Activated T-helper 2 cell treated with anti-CD3 and anti-CD28 coated beads, Interferon-gamma antibody, Interleukin-2, Interleukin-4, amounts not matched to agents 10 μg/mL and 5 μg/mL and 100 μg/mL, durations not matched to agents 14 hours and 24 hours and 36 hours (primary cell): ENCODE measurements at regions of chr13 and their contacts with region 1.

Region 1: DNA sequence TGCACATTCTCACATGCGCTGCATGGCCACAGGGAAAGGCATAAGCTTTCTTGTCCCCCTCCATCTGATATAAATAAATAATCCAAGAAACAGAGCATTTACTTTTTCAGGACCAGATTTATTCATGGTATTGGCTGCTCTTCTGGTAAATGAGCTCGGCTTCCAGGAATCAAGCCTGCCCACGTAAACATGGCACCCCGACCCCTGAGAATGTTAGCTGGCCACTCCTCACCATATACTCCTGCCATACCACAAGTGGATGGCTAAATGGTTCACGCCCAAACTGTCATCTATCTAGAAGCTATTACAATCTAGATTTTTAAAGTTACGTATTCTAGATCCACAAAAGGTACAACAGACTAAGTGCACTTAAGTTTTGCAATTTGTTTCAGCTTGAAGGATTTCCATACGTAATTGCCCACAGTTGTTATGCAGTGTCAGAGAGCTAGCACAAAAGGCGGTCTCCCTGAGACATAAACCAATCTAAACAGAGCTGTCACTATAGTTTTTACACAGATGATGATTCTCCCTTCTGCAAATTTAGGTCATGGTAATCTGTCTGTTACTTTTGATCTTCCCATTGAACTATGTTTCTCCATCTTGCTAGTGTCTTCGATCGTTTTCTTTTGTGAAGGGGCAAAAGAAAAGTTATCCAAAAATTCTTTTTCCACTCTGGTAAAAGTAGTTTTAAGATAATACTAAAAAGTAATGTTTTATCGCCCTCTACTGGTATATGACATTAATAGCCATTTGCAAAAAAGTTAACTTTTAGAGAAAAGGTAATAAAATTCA is 16.2 kb upstream of the FOXO1 start:
- DNase-seq: no peak
- H3K4me3 Mint-ChIP-seq: no peak overlapping the region
- H3K27ac Mint-ChIP-seq: no peak overlapping the region
- H3K4me1 Mint-ChIP-seq: peaks cover 10% of the 10 kb centered on the region
- H3K27me3 Mint-ChIP-seq: no peaks in the 10 kb centered on the region

Region 2: DNA sequence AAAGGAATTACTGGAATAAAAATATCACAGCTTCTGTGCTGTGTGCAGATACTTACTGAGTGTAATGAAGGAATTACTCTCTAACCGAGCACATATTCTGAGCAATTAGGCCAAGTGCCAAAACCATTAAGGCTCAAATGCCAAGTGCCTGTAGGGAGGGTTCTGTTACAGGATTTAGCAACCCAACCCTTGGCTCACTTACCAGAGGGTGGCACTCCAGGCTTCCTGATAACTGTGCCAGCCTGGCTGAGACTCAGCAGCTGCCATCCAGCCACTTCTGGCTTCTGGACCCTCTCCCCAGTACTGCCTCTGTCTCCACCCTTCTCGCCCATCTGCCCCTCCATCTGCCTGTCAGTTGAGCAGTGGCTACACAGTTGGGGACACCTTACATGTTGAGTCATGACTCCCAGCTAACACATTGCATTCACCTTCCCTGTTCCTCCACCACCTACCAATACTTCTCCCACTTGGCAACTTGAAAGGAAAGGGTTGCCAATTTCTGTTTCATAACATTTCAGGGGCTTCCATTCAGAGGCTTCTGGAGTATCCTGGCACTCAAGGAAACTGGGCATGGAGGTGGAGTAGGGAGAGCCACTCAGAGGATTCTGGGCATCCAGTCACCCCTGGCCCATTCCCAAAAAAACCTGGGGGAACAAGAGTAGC is 916.7 kb before region 1 on chr13:
- intact Hi-C with region 1: loop called (anchors 5 kb)
- DNase-seq: no peak
- H3K4me3 Mint-ChIP-seq: no peak overlapping the region
- H3K27ac Mint-ChIP-seq: no peak overlapping the region
- H3K4me1 Mint-ChIP-seq: peaks cover 5% of the 10 kb centered on the region
- H3K27me3 Mint-ChIP-seq: no peaks in the 10 kb centered on the region

Region 3: DNA sequence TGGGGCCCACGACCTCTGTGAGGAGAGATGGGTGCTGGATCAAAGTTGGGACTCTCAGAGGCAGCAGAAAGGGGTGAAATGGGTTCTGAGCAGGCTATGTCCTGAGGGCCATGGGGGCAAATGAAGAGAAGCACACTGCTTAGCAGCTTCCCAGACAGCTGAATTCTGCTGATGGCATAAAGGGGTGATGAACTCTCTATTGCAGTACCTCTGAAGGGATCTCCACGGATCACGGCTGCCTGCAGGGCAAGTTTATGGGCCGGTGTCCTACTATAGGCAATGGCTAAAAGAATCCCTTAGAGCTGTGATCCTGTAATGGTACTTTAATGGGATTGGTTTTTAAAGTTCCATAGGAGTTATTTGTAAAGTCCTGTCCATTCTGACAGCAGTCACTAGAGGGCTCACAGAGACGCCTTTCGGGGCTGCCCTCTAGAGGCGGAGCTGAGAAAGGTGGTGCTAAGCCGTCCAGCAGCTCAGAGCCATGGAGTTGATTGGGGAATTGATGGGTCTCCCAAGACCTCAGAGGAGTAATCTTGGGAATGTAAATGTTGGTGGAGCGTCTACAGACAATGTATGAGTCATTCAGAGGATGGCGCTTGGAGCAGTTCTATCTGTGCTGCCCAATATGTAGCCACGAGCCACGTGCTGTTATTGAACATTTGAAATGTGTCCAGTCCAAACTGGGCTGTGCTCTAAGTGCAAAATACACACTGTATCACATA is 739.9 kb before region 1 on chr13:
- intact Hi-C with region 1: loop called (anchors 5 kb)
- DNase-seq: peak; percentile 38
- H3K4me3 Mint-ChIP-seq: no peak overlapping the region
- H3K27ac Mint-ChIP-seq: no peak overlapping the region
- H3K4me1 Mint-ChIP-seq: peaks cover 17% of the 10 kb centered on the region
- H3K27me3 Mint-ChIP-seq: peaks cover 1% of the 10 kb centered on the region

Region 4: GRCh38 chr13:40069173-40070044 is 613.2 kb before region 1 on chr13:
- intact Hi-C with region 1: loop called (anchors 2 kb)
- DNase-seq: peak; percentile 51
- H3K4me3 Mint-ChIP-seq: no peak overlapping the region
- H3K27ac Mint-ChIP-seq: no peak overlapping the region
- H3K4me1 Mint-ChIP-seq: peaks cover 22% of the 10 kb centered on the region
- H3K27me3 Mint-ChIP-seq: no peaks in the 10 kb centered on the region

Region 5: GRCh38 chr13:40522282-40522681 is 160.4 kb before region 1 on chr13:
- intact Hi-C with region 1: no loop called
- DNase-seq: no peak
- H3K4me3 Mint-ChIP-seq: no peak overlapping the region
- H3K27ac Mint-ChIP-seq: no peak overlapping the region
- H3K4me1 Mint-ChIP-seq: peaks cover 39% of the 10 kb centered on the region
- H3K27me3 Mint-ChIP-seq: no peaks in the 10 kb centered on the region

Region 6: DNA sequence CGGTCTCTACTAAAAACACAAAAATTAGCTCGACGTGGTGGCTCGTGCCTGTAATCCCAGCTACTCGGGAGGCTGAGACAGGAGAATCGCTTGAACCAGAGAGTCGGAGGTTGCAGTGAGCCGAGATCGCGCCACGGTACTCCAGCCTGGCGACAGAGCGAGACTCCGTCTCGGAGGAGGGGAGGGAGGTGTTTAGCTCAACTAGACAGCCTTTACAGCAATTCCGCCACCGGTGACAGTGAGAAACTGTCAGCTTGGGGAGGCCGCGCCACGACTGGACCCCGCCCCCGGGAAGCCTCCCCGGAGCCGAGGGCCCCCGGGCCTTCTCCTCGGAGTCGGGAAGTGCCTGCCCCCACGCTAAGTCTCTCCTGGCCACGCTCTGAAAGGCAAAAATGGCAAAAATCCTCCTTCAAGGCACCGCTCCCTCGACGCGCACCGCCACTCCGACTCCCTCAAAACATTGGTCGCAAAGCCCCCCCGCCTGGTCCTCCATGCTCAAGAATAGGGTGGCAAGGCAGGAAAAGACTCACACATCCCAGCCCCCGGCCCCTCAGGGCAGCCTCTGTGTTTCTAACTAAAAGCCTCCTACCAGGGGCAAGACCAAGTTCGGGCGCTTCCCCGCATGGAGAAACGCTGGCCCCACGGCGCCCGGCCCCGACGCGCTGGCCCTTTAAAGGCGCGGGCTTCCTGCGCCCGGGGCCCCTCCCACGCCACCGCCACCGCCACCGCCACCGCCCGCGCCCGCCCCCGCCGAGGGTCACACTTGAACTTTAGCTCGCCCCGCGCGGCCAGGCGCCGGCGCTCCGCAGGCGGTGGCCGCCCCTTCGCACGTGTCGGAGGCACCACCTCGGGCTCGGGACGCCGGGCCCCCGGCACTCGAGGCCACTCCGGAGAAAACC is 18.3 kb before region 1 on chr13:
- intact Hi-C with region 1: no loop called
- DNase-seq: peak; percentile 75
- H3K4me3 Mint-ChIP-seq: peak overlapping the region; percentile 92
- H3K27ac Mint-ChIP-seq: peak overlapping the region; percentile 95
- H3K4me1 Mint-ChIP-seq: peaks cover 48% of the 10 kb centered on the region
- H3K27me3 Mint-ChIP-seq: no peaks in the 10 kb centered on the region